ENCODE measurements at regions of chr6 and their contacts with region 1.

Region 1: GRCh38 chr6:35688581-35689322 is at the start of gene FKBP5:
- DNase-seq: peak; percentile 98 to 99
- ATAC-seq: peak; percentile 75 to 91 (median 82)
- H3K4me3 ChIP-seq: peak within 1 kb of the TSS; percentile 85
- H3K27ac ChIP-seq: peak within 1 kb of the TSS; percentile 96
- H3K4me1 ChIP-seq: peaks cover 40% of the 10 kb centered on the region
- H3K27me3 ChIP-seq: no peaks in the 10 kb centered on the region
- CTCF ChIP-seq: no peak
- total RNA-seq, gene FKBP5: 56.5 to 1,905 (median 378) TPM

Region 2: GRCh38 chr6:35544523-35545313 is 144.0 kb before region 1 on chr6:
- intact Hi-C with region 1: no loop called
- DNase-seq: no peak
- ATAC-seq: no peak
- H3K4me3 ChIP-seq: no peak overlapping the region
- H3K27ac ChIP-seq: no peak overlapping the region
- H3K4me1 ChIP-seq: no peaks in the 10 kb centered on the region
- H3K27me3 ChIP-seq: peaks cover 0 to 7% (median 0%) of the 10 kb centered on the region in 3 donors
- CTCF ChIP-seq: no peak

Region 3: GRCh38 chr6:35650015-35650414 is 38.7 kb before region 1 on chr6:
- intact Hi-C with region 1: no loop called
- DNase-seq: no peak
- ATAC-seq: peak in 3 of 4 donors; percentile 33 to 56 (median 38)
- H3K4me3 ChIP-seq: no peak overlapping the region
- H3K27ac ChIP-seq: no peak overlapping the region
- H3K4me1 ChIP-seq: peaks cover 50% of the 10 kb centered on the region
- H3K27me3 ChIP-seq: no peaks in the 10 kb centered on the region
- CTCF ChIP-seq: no peak

Region 4: GRCh38 chr6:35727935-35728682 is 39.4 kb after region 1 on chr6:
- intact Hi-C with region 1: loop called (anchors 1 to 2 kb)
- DNase-seq: peak; percentile 96 to 98
- ATAC-seq: peak; percentile 49 to 75 (median 60)
- H3K4me3 ChIP-seq: peak overlapping the region; percentile 75
- H3K27ac ChIP-seq: peak overlapping the region; percentile 99
- H3K4me1 ChIP-seq: peaks cover 73% of the 10 kb centered on the region
- H3K27me3 ChIP-seq: no peaks in the 10 kb centered on the region
- CTCF ChIP-seq: no peak